ENCODE measurements at regions of chr14 and their contacts with region 1.

Region 1: GRCh38 chr14:105944632-105945610 is 418.5 kb downstream of the TMEM121 start:
- DNase-seq: peak; percentile 92
- ATAC-seq: peak; percentile 96
- H3K4me3 Mint-ChIP-seq: no peak overlapping the region
- H3K27ac Mint-ChIP-seq: no peak overlapping the region
- H3K4me1 Mint-ChIP-seq: peaks cover 6% of the 10 kb centered on the region
- H3K27me3 Mint-ChIP-seq: no peaks in the 10 kb centered on the region

Region 2: GRCh38 chr14:105411017-105411941 is 533.6 kb before region 1 on chr14:
- CTCF ChIA-PET with region 1: no interaction called
- POLR2A ChIA-PET with region 1: no interaction called
- intact Hi-C with region 1: no loop called
- DNase-seq: peak; percentile 50
- ATAC-seq: peak; percentile 47
- H3K4me3 Mint-ChIP-seq: no peak overlapping the region
- H3K27ac Mint-ChIP-seq: no peak overlapping the region
- H3K4me1 Mint-ChIP-seq: peaks cover 8% of the 10 kb centered on the region
- H3K27me3 Mint-ChIP-seq: peaks cover 17% of the 10 kb centered on the region

Region 3: GRCh38 chr14:105554022-105554421 is 390.9 kb before region 1 on chr14:
- CTCF ChIA-PET with region 1: no interaction called
- POLR2A ChIA-PET with region 1: no interaction called
- intact Hi-C with region 1: loop called in 1 of 2 experiments (anchors 10 kb)
- DNase-seq: no peak
- ATAC-seq: no peak
- H3K4me3 Mint-ChIP-seq: no peak overlapping the region
- H3K27ac Mint-ChIP-seq: no peak overlapping the region
- H3K4me1 Mint-ChIP-seq: no peaks in the 10 kb centered on the region
- H3K27me3 Mint-ChIP-seq: peaks cover 7% of the 10 kb centered on the region

Region 4: DNA sequence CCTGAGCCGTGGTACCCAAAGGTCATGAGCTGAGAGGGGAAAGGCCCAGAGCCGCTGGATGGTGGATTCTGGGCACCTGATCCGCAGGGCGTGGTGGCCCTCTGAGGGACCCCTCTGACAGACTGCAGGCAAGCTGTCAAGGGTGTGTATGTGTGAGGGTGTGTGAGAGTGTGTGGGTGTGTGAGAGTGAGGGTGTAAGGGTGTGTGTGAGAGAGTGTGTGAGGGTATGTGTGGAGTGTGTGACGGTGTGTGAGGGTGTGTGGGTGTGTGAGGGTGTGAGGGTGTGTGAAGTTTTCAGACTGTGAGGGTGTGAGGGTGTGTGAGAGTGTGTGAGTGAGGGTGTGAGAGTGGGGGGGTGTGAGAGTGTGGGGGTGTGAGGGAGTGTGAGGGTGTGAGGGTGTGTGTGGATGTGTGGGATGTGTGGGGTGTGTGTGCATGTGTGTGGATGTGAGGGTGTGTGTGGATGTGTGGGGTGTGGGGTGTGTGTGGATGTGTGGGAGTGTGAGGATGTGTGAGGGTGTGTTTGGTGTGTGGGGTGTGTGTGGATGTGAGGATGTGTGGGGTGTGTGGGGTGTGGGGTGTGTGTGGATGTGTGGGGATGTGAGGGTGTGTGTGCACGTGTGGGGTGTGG is 261.9 kb before region 1 on chr14:
- CTCF ChIA-PET with region 1: no interaction called
- POLR2A ChIA-PET with region 1: no interaction called
- intact Hi-C with region 1: loop called (anchors 1 to 5 kb)
- DNase-seq: no peak
- ATAC-seq: no peak
- H3K4me3 Mint-ChIP-seq: no peak overlapping the region
- H3K27ac Mint-ChIP-seq: no peak overlapping the region
- H3K4me1 Mint-ChIP-seq: peaks cover 2% of the 10 kb centered on the region
- H3K27me3 Mint-ChIP-seq: peaks cover 3% of the 10 kb centered on the region

Region 5: DNA sequence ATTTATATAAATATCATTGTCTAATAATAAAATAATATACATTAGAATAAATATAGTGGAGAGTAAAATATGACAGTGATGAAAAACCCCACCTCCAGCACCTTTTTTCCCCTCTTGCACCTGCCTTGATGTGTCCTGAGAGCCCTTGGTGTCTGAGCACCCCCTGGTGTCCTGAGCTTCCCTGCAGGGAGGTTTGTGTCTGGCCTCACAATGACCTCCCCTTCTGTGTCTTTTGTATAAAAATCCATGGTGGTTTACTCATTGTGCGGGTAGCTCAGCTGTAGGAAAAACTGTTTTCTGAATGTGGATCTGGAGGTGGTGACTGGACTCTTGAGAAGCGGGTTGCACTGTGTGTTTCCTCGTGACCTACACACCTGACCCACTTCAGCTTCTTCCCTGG is 218.4 kb after region 1 on chr14:
- CTCF ChIA-PET with region 1: no interaction called
- POLR2A ChIA-PET with region 1: no interaction called
- intact Hi-C with region 1: no loop called
- DNase-seq: no peak
- ATAC-seq: no peak
- H3K4me3 Mint-ChIP-seq: no peak overlapping the region
- H3K27ac Mint-ChIP-seq: no peak overlapping the region
- H3K4me1 Mint-ChIP-seq: peaks cover 17% of the 10 kb centered on the region
- H3K27me3 Mint-ChIP-seq: peaks cover 6% of the 10 kb centered on the region